ENCODE measurements at regions of chr5 and their contacts with region 1.

Region 1: DNA sequence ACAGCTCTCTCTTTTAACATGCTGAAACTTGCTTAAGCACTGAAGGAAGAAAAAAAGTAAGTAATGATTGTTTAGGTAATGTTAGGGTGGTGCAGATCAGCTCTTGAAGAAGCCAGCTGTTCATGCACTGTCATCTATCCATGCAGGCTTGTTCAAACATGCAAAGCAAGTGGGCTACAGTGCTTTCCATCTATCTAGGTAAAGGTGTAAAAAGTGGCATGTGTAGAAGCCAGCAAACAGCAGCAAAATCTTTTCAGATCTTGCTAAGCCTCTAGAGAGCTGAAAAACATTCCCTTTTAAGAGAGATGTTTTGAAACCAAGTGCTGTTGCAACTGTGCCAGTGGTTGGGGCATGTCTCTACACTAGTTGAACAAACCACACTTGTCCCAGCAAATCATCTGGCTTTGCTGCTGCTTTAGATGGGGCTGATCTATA is 214.4 kb downstream of the EFNA5 start:
- H3K4me3 ChIP-seq: no peak overlapping the region
- H3K27ac ChIP-seq: no peak overlapping the region
- H3K4me1 ChIP-seq: peaks cover 21% of the 10 kb centered on the region
- CTCF ChIP-seq: no peak

Region 2: DNA sequence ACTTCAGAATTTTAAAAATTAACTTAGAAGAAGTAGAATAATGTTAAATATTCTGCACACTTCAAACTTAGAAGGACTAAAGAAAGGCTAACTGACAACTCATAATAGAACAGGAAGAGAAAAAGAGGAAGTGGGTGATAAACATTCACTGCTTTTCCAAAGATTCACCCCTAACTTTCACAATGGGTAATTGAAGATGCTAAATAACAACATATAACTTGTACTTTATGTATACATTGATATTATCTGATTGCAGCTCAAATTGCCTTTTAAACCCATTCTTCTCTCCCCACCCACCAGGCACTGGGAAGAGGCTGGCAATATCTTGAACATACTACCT is 162.1 kb before region 1 on chr5:
- CTCF ChIA-PET with region 1: no interaction called
- POLR2A ChIA-PET with region 1: no interaction called
- H3K4me3 ChIP-seq: no peak overlapping the region
- H3K27ac ChIP-seq: no peak overlapping the region
- H3K4me1 ChIP-seq: no peaks in the 10 kb centered on the region
- CTCF ChIP-seq: no peak

Region 3: GRCh38 chr5:107425541-107426256 is 30.6 kb before region 1 on chr5:
- CTCF ChIA-PET with region 1: no interaction called
- POLR2A ChIA-PET with region 1: no interaction called
- H3K4me3 ChIP-seq: no peak overlapping the region
- H3K27ac ChIP-seq: no peak overlapping the region
- H3K4me1 ChIP-seq: no peaks in the 10 kb centered on the region
- CTCF ChIP-seq: no peak

Region 4: GRCh38 chr5:107466233-107466769 is 10.0 kb after region 1 on chr5:
- CTCF ChIA-PET with region 1: interaction called, 4 read pairs
- POLR2A ChIA-PET with region 1: interaction called, 14 read pairs
- H3K4me3 ChIP-seq: no peak overlapping the region
- H3K27ac ChIP-seq: no peak overlapping the region; the same call in 1 of the 2 replicates
- H3K4me1 ChIP-seq: peaks cover 19% of the 10 kb centered on the region
- CTCF ChIP-seq: no peak